CD4-positive, alpha-beta T cell (primary cell): ENCODE measurements at regions of chr19 and their contacts with region 1.

Region 1: GRCh38 chr19:14419106-14419813 is at the start of gene DDX39A:
- DNase-seq: peak; percentile 92 to 99 (median 94)
- ATAC-seq: peak; percentile 84
- H3K4me3 ChIP-seq: peak within 1 kb of the TSS; percentile 88
- H3K4me3 Mint-ChIP-seq: peak within 1 kb of the TSS; percentile 95
- H3K27ac ChIP-seq: peak within 1 kb of the TSS; percentile 95 to 97
- H3K27ac Mint-ChIP-seq: peak within 1 kb of the TSS; percentile 95
- H3K4me1 ChIP-seq: peaks cover 54% of the 10 kb centered on the region
- H3K4me1 Mint-ChIP-seq: peaks cover 42% of the 10 kb centered on the region
- H3K27me3 ChIP-seq: no peaks in the 10 kb centered on the region
- H3K27me3 Mint-ChIP-seq: no peaks in the 10 kb centered on the region
- CTCF ChIP-seq: no peak
- total RNA-seq, gene DDX39A: 296 to 299 TPM

Region 2: GRCh38 chr19:14366498-14366915 is 52.8 kb before region 1 on chr19:
- CTCF ChIA-PET with region 1: interaction called, 6 read pairs
- POLR2A ChIA-PET with region 1: interaction called, 7 read pairs
- intact Hi-C with region 1: loop called in 1 of 2 experiments (anchors 2 kb)
- DNase-seq: peak; percentile 86 to 98 (median 92)
- ATAC-seq: peak; percentile 58
- H3K4me3 ChIP-seq: peak overlapping the region; percentile 24
- H3K4me3 Mint-ChIP-seq: peak overlapping the region; percentile 82
- H3K27ac ChIP-seq: peak overlapping the region; percentile 97 to 99
- H3K27ac Mint-ChIP-seq: peak overlapping the region; percentile 84
- H3K4me1 ChIP-seq: peaks cover 95% of the 10 kb centered on the region
- H3K4me1 Mint-ChIP-seq: peaks cover 65% of the 10 kb centered on the region
- H3K27me3 ChIP-seq: no peaks in the 10 kb centered on the region
- H3K27me3 Mint-ChIP-seq: no peaks in the 10 kb centered on the region
- CTCF ChIP-seq: no peak

Region 3: GRCh38 chr19:14383661-14384555 is 35.4 kb before region 1 on chr19:
- CTCF ChIA-PET with region 1: interaction called, 4 read pairs
- POLR2A ChIA-PET with region 1: interaction called, 10 read pairs
- intact Hi-C with region 1: no loop called
- DNase-seq: peak in 5 of 14 experiments; percentile 46 to 84 (median 79)
- ATAC-seq: no peak
- H3K4me3 ChIP-seq: peak overlapping the region; percentile 92
- H3K4me3 Mint-ChIP-seq: peak overlapping the region; percentile 93
- H3K27ac ChIP-seq: peak overlapping the region; percentile 96 to 99
- H3K27ac Mint-ChIP-seq: peak overlapping the region; percentile 94
- H3K4me1 ChIP-seq: peaks cover 81% of the 10 kb centered on the region
- H3K4me1 Mint-ChIP-seq: peaks cover 52% of the 10 kb centered on the region
- H3K27me3 ChIP-seq: no peaks in the 10 kb centered on the region
- H3K27me3 Mint-ChIP-seq: no peaks in the 10 kb centered on the region
- CTCF ChIP-seq: no peak

Region 4: DNA sequence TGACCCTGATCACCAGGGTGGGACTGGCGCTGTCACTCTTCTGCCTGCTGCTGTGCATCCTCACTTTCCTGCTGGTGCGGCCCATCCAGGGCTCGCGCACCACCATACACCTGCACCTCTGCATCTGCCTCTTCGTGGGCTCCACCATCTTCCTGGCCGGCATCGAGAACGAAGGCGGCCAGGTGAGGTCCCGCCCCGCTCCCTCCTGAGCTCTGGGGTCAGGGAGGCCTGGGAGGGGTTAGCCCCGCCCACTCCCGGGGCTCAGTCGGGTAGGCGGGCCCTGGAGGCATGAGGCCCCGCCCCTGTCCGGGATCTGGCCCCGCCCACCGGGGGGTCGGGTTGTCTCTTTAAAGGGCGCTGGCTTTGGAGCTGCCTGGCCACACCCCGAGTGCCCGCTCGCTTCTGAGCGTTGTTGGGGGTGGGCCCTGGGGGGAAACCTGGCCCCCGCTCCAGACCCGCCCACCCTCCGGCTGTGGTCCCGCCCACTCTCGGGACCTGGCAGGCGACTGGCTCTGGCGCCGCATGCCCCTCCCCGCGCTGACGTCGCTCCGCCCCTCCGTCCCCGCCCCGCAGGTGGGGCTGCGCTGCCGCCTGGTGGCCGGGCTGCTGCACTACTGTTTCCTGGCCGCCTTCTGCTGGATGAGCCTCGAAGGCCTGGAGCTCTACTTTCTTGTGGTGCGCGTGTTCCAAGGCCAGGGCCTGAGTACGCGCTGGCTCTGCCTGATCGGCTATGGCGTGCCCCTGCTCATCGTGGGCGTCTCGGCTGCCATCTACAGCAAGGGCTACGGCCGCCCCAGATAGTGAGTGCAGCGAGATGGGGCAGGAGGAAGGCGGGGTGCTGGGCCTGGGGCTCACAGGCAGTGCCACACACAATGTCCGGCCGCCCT is 13.3 kb before region 1 on chr19:
- CTCF ChIA-PET with region 1: interaction called, 21 read pairs
- POLR2A ChIA-PET with region 1: interaction called, 12 read pairs
- intact Hi-C with region 1: no loop called
- DNase-seq: peak; percentile 78 to 95 (median 86)
- ATAC-seq: peak; percentile 73
- H3K4me3 ChIP-seq: no peak overlapping the region
- H3K4me3 Mint-ChIP-seq: peak overlapping the region; percentile 69
- H3K27ac ChIP-seq: peak overlapping the region; percentile 22 to 56
- H3K27ac Mint-ChIP-seq: peak overlapping the region; percentile 92
- H3K4me1 ChIP-seq: peaks cover 66% of the 10 kb centered on the region
- H3K4me1 Mint-ChIP-seq: peaks cover 29% of the 10 kb centered on the region
- H3K27me3 ChIP-seq: no peaks in the 10 kb centered on the region
- H3K27me3 Mint-ChIP-seq: no peaks in the 10 kb centered on the region
- CTCF ChIP-seq: peak; percentile 85

Region 5: GRCh38 chr19:14432791-14433553 is 13.7 kb after region 1 on chr19 and contains the start of gene PKN1:
- CTCF ChIA-PET with region 1: interaction called, 12 read pairs
- POLR2A ChIA-PET with region 1: interaction called, 10 read pairs
- intact Hi-C with region 1: no loop called
- DNase-seq: peak in 10 of 14 experiments; percentile 18 to 70 (median 47)
- ATAC-seq: peak; percentile 3
- H3K4me3 ChIP-seq: peak within 1 kb of the TSS; percentile 85
- H3K4me3 Mint-ChIP-seq: peak within 1 kb of the TSS; percentile 90
- H3K27ac ChIP-seq: peak within 1 kb of the TSS; percentile 74 to 82
- H3K27ac Mint-ChIP-seq: peak within 1 kb of the TSS; percentile 91
- H3K4me1 ChIP-seq: peaks cover 42% of the 10 kb centered on the region
- H3K4me1 Mint-ChIP-seq: peaks cover 44% of the 10 kb centered on the region
- H3K27me3 ChIP-seq: no peaks in the 10 kb centered on the region
- H3K27me3 Mint-ChIP-seq: no peaks in the 10 kb centered on the region
- CTCF ChIP-seq: no peak
- total RNA-seq, gene PKN1: 171 TPM

Region 6: GRCh38 chr19:14472202-14472938 is 53.1 kb after region 1 on chr19:
- CTCF ChIA-PET with region 1: no interaction called
- POLR2A ChIA-PET with region 1: interaction called, 11 read pairs
- intact Hi-C with region 1: no loop called
- DNase-seq: peak; percentile 77 to 91 (median 86)
- ATAC-seq: peak; percentile 84
- H3K4me3 ChIP-seq: peak overlapping the region; percentile 34
- H3K4me3 Mint-ChIP-seq: peak overlapping the region; percentile 55
- H3K27ac ChIP-seq: no peak overlapping the region
- H3K27ac Mint-ChIP-seq: no peak overlapping the region
- H3K4me1 ChIP-seq: peaks cover 31% of the 10 kb centered on the region
- H3K4me1 Mint-ChIP-seq: peaks cover 36% of the 10 kb centered on the region
- H3K27me3 ChIP-seq: peaks cover 19 to 22% of the 10 kb centered on the region in 2 experiments
- H3K27me3 Mint-ChIP-seq: peaks cover 33% of the 10 kb centered on the region
- CTCF ChIP-seq: peak; percentile 98

Region 7: DNA sequence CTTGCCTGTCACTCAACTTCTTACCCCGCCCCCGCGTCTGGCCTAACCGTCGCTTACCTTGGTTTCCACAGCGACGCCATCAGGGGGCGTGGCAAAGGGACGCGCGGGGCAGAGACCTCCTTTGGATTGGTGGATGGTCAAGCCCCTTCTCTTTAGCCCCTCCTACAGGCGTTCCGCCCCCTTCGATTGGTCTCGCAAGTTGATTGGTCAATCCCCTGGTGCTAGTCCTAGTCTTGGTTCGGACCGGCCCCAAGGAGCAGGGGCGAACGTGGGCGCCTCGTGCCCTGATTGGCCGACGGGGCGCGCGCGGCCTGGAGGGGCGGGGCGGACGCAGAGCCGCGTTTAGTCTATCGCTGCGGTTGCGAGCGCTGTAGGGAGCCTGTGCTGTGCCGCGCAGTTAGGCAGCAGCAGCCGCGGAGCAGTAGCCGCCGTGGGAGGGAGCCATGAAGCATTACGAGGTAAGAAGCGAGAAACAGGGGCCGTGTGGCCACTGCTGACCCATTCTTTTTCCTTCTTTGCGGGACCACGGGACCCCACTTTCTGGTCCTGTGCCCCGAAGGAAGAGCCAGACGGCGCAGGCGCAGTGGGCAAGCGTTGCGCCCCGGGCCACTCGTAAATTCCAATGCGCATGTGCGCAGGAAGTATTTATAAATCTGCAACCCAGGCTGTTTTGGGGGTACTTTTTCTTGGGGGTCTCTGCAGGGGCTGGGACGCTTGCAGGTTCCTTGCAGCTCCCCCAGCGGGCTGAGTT is 110.2 kb after region 1 on chr19 and contains the start of gene TECR:
- CTCF ChIA-PET with region 1: no interaction called
- POLR2A ChIA-PET with region 1: no interaction called
- intact Hi-C with region 1: loop called in 1 of 2 experiments (anchors 5 kb)
- DNase-seq: peak; percentile 99 to 100 (median 100)
- ATAC-seq: peak; percentile 92
- H3K4me3 ChIP-seq: peak within 1 kb of the TSS; percentile 92
- H3K4me3 Mint-ChIP-seq: peak within 1 kb of the TSS; percentile 92
- H3K27ac ChIP-seq: peak within 1 kb of the TSS; percentile 85 to 88
- H3K27ac Mint-ChIP-seq: peak within 1 kb of the TSS; percentile 100
- H3K4me1 ChIP-seq: peaks cover 59% of the 10 kb centered on the region
- H3K4me1 Mint-ChIP-seq: peaks cover 57% of the 10 kb centered on the region
- H3K27me3 ChIP-seq: no peaks in the 10 kb centered on the region
- H3K27me3 Mint-ChIP-seq: no peaks in the 10 kb centered on the region
- CTCF ChIP-seq: no peak
- total RNA-seq, gene TECR: 217 to 232 TPM